WTC11 (cell line): ENCODE measurements at regions of chr6 and their contacts with region 1.

Region 1: GRCh38 chr6:166097915-166098522 is 69.6 kb downstream of the TBXT start:
- DNase-seq: peak; percentile 89
- ATAC-seq: peak; percentile 98
- H3K4me3 Mint-ChIP-seq: peak overlapping the region; percentile 74
- H3K27ac Mint-ChIP-seq: no peak overlapping the region
- H3K4me1 Mint-ChIP-seq: peaks cover 4% of the 10 kb centered on the region
- H3K27me3 Mint-ChIP-seq: peaks cover 21% of the 10 kb centered on the region
- CTCF ChIP-seq: peak; percentile 95

Region 2: GRCh38 chr6:165931675-165932074 is 166.3 kb before region 1 on chr6:
- CTCF ChIA-PET with region 1: interaction called, 12 read pairs
- POLR2A ChIA-PET with region 1: no interaction called
- DNase-seq: peak; percentile 24
- ATAC-seq: peak; percentile 68
- H3K4me3 Mint-ChIP-seq: no peak overlapping the region
- H3K27ac Mint-ChIP-seq: no peak overlapping the region
- H3K4me1 Mint-ChIP-seq: peaks cover 2% of the 10 kb centered on the region
- H3K27me3 Mint-ChIP-seq: peaks cover 6% of the 10 kb centered on the region
- CTCF ChIP-seq: no peak

Region 3: DNA sequence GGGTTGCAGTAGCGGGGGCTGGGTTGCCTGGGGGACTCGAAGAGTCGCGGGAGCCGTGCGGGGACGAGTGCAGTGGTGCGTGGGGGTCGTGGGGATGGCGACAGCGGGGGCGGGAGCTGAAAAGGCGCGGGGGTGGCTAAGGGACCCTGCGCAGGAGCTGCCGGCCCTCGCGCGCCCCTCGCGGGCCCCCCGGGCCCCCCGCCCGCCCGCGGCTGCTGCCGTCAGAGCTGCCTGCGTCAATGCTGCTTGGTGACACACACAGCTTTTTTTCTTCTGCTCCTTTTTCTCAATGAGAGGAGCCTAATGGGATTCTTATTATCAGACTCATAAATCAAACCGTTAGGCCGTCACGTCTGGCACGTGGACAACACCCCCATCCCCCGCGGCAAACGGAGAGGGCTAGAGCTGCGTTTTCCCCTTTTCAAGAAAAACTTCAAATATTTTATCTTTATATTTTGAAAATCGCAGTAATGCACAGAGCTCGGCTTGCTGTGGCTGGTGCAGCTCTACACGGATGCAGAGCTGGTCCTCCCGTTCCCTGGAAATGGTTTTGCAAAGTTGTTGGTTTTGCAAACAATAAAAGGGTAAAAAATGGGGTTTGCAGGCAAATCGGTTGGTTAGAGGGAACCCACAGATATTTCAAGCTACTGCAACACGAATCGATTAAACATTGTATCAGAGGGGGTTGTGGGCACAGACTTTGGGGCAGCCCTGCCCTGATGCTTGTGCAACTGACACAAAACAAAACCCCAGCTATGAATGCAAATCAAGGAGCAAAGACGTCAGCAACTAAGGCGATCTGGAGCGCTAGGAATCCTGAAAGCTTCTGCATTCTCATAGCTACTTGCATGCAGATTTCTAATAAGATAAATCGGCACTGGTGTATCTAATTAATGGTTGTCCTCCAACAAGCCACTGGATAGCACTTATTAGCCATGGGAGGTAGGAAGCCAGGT is 91.8 kb before region 1 on chr6:
- CTCF ChIA-PET with region 1: interaction called, 18 read pairs
- POLR2A ChIA-PET with region 1: no interaction called
- DNase-seq: no peak
- ATAC-seq: no peak
- H3K4me3 Mint-ChIP-seq: peak overlapping the region; percentile 45
- H3K27ac Mint-ChIP-seq: no peak overlapping the region
- H3K4me1 Mint-ChIP-seq: peaks cover 29% of the 10 kb centered on the region
- H3K27me3 Mint-ChIP-seq: peaks cover 84% of the 10 kb centered on the region
- CTCF ChIP-seq: no peak

Region 4: GRCh38 chr6:166078294-166078693 is 19.7 kb before region 1 on chr6:
- CTCF ChIA-PET with region 1: interaction called, 26 read pairs
- POLR2A ChIA-PET with region 1: no interaction called
- DNase-seq: no peak
- ATAC-seq: no peak
- H3K4me3 Mint-ChIP-seq: no peak overlapping the region
- H3K27ac Mint-ChIP-seq: no peak overlapping the region
- H3K4me1 Mint-ChIP-seq: no peaks in the 10 kb centered on the region
- H3K27me3 Mint-ChIP-seq: no peaks in the 10 kb centered on the region; the same call in 1 of the 2 replicates
- CTCF ChIP-seq: no peak

Region 5: GRCh38 chr6:166553563-166554271 is 455.7 kb after region 1 on chr6:
- CTCF ChIA-PET with region 1: no interaction called
- POLR2A ChIA-PET with region 1: no interaction called
- DNase-seq: no peak
- ATAC-seq: no peak
- H3K4me3 Mint-ChIP-seq: no peak overlapping the region
- H3K27ac Mint-ChIP-seq: no peak overlapping the region
- H3K4me1 Mint-ChIP-seq: peaks cover 63% of the 10 kb centered on the region
- H3K27me3 Mint-ChIP-seq: no peaks in the 10 kb centered on the region
- CTCF ChIP-seq: no peak